PC-3 (cell line): ENCODE measurements at regions of chr11 and their contacts with region 1.

Region 1: DNA sequence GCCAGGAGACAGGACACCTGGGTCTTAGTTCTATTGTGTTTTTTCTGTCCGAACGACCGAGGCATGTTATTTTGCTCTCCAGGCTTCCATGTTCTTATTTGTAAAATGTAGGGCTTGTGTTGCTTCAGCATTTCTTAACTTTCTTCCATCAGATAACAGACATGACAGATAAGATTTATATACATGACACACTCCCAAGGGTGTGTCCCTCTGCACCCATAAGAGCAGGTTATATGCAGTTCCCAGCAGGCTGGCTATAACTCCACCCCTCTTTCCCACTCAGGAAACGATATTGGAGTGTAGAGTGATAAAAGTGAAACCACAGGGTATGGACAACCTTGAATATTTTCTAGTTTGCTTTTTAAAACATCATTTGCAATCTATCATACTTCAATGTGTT is 65.8 kb downstream of the APIP start:
- DNase-seq: peak; percentile 46
- ATAC-seq: peak; percentile 76
- H3K4me3 ChIP-seq: no peak overlapping the region
- H3K27ac ChIP-seq: no peak overlapping the region
- H3K4me1 ChIP-seq: peaks cover 17% of the 10 kb centered on the region
- H3K27me3 ChIP-seq: no peaks in the 10 kb centered on the region
- CTCF ChIP-seq: no peak

Region 2: GRCh38 chr11:34405079-34405858 is 445.1 kb before region 1 on chr11:
- CTCF ChIA-PET with region 1: no interaction called
- POLR2A ChIA-PET with region 1: interaction called, 10 read pairs
- intact Hi-C with region 1: no loop called
- DNase-seq: no peak
- ATAC-seq: no peak
- H3K4me3 ChIP-seq: no peak overlapping the region
- H3K27ac ChIP-seq: no peak overlapping the region
- H3K4me1 ChIP-seq: peaks cover 17% of the 10 kb centered on the region
- H3K27me3 ChIP-seq: no peaks in the 10 kb centered on the region
- CTCF ChIP-seq: no peak